Heart left ventricle (tissue), 16 donors: ENCODE measurements at regions of chr5 and their contacts with region 1.

Region 1: GRCh38 chr5:133688391-133688790 is 76.0 kb upstream of the FSTL4 start:
- DNase-seq: no peak
- ATAC-seq: no peak
- H3K4me3 ChIP-seq: no peak overlapping the region
- H3K27ac ChIP-seq: no peak overlapping the region
- H3K4me1 ChIP-seq: no peaks in the 10 kb centered on the region
- H3K27me3 ChIP-seq: peaks cover 0 to 64% (median 12%) of the 10 kb centered on the region in 9 donors
- CTCF ChIP-seq: no peak
- POLR2A ChIP-seq: no peak

Region 2: DNA sequence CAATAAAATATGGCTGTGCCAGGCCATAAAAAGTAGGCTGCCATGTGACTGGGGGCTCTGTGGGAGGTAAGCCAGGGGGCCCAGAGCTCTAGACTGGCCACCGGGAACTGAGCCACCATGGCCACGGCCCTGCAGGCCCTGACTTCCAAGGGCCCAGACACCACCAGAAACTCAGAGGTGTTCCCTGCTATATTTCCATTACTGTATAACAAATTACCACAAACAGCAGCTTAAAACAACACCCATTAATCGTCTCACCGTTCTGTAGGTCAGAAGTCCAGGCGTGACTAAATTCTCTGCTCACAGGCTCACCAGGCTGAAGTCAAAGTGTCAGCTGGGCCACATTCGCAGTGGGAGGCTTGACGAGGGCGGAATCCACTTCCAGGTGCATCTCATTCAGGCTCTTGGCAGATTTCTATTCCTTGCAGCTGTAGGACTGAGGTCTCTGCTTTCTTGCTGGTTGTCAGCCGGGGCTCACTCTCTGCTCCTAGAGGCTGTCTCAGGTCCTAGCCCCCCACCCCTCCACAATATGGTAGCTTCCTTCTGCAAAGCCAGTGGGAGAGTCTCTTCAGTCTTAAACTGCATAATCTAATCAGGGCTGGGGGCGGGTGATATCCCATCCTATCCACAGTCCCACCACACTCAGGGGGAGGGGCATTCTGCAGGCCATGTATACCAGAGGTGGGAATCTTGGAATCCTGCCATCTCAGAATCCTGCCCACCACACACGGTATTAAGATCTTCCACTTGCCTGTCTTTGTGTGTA is 154.6 kb after region 1 on chr5:
- intact Hi-C with region 1: loop called in 1 of 10 experiments (anchors 5 kb)
- DNase-seq: no peak
- ATAC-seq: no peak
- H3K4me3 ChIP-seq: no peak overlapping the region
- H3K27ac ChIP-seq: no peak overlapping the region
- H3K4me1 ChIP-seq: no peaks in the 10 kb centered on the region
- H3K27me3 ChIP-seq: peaks cover 0 to 4% (median 0%) of the 10 kb centered on the region in 9 donors
- CTCF ChIP-seq: no peak
- POLR2A ChIP-seq: no peak